Cardiac septum (tissue), 1 donor: ENCODE measurements at regions of chr1 and their contacts with region 1.

Region 1: GRCh38 chr1:2642560-2643413 is 10.0 kb upstream of the MMEL1 start:
- DNase-seq: peak; percentile 93

Region 2: GRCh38 chr1:2194898-2195673 is 447.7 kb before region 1 on chr1:
- intact Hi-C with region 1: loop called (anchors 5 kb)
- DNase-seq: peak; percentile 95

Region 3: GRCh38 chr1:2412519-2413233 is 230.1 kb before region 1 on chr1 and contains the start of gene PEX10:
- intact Hi-C with region 1: loop called (anchors 2 kb)
- DNase-seq: peak; percentile 99
- total RNA-seq, gene PEX10: 18.1 TPM

Region 4: DNA sequence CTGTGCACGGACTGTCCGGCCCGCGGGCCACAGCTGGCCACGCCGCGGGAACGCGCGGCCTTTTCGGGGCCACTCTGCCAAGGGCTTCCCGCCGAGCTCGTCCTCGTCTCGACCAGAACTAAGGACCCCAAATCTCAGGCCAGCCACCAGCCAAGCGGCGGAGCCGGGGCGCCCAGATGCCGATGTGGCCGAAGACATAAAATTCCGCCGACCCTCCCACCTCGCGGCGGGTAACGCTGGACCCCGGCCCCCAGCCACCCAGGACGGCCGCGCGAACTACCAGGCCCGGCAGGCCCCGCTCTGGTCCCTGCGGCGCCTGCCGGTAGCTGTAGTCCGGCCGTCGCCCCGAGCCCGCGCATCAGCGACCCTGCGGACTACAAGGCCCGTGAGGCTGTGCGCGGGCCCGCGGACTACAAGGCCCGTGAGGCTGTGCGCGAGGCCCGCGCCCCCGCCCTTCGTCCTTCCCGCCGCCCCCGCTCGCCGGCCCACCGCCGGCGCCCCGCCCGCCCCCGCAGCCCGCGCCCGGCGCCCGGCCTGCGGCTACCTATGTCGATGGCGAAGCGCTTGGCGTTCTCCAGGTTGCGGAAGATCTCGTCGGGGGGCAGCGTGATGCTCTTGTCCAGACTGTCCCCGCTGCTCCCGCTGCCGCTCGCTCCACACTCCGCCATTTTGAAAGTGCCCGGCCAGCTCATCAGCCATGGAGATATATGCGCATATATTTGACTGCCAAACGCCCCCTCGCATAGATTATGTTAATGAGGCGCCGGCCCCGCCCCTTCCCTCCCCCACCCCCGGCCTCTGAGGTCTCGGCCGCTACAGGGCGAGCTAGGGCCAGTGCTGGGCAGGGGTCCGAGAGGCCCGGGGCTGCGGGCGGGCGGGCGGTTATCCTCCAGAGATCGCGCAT is 116.6 kb before region 1 on chr1 and contains the start of gene PANK4:
- intact Hi-C with region 1: loop called (anchors 10 kb)
- DNase-seq: peak; percentile 95
- total RNA-seq, gene PANK4: 37.1 TPM

Region 5: GRCh38 chr1:2575801-2576663 is 66.8 kb before region 1 on chr1:
- intact Hi-C with region 1: no loop called
- DNase-seq: no peak

Region 6: DNA sequence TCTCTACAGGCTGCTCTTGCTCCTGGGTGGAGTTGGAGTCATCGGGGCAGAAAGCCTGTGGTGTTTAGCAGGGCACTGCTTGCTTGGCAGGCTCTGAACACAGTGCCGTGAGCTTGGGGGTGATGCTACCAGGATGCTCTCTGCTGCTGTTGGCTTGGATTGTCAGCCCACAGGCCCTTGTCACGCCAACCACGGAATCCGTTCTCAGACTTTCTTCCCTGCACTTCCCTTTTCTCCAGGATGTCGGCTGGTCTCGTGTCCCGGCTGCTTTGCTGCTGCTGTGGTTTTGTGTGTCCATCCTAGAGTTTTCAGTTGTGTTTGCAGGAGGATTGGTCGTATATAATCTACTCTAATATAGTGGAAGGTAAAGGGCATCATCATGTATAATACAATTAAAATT is 203.1 kb after region 1 on chr1:
- intact Hi-C with region 1: no loop called
- DNase-seq: no peak